ENCODE measurements at regions of chr22 and their contacts with region 1.

Region 1: DNA sequence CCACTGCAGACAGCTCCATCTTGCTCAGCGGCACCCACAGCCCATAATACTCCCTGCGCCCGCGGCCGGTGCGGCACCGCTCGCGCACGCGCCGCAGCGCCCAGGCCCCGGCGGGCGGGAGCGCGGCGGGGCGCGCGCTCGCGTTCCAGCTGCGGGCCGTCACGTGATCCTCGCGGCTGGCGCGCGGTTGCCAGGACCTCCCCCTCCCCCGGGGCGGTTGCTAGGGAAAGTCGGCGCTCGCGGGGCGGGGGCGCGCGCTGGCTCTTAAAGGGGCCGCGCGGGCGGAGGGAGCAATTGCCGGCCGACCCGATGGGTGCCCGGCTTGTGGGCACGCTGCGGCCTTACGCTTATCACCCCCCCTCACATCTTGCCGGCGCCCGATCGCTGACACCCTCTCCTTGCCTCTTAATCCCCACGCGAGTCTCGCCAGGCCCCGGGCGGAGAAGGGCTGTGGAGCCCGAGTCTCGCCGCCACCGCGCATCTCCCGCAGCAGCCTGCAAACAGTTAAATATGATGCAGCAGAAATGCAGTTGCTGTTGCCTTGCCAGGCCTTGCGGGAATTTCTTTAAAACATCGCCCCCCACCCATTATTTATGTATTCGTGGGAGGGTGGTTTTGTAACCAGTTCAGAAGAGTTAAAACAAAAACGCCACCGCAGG is at the start of gene CBX6:
- DNase-seq: peak; percentile 97
- ATAC-seq: peak; percentile 76
- H3K4me3 ChIP-seq: peak within 1 kb of the TSS; percentile 65 to 93 (median 75)
- H3K4me3 Mint-ChIP-seq: peak within 1 kb of the TSS; percentile 94
- H3K27ac ChIP-seq: peak within 1 kb of the TSS; percentile 42 to 54
- H3K27ac Mint-ChIP-seq: peak within 1 kb of the TSS; percentile 92
- H3K4me1 ChIP-seq: peaks cover 31 to 49% of the 10 kb centered on the region in 2 donors
- H3K4me1 Mint-ChIP-seq: peaks cover 49% of the 10 kb centered on the region
- H3K27me3 ChIP-seq: peaks cover 0 to 23% (median 8%) of the 10 kb centered on the region in 4 experiments
- H3K27me3 Mint-ChIP-seq: peaks cover 19% of the 10 kb centered on the region
- CTCF ChIP-seq: no peak
- total RNA-seq, gene CBX6: 55.1 and 57.6 TPM in 2 replicates

Region 2: GRCh38 chr22:38681784-38682335 is 190.4 kb before region 1 on chr22 and contains the start of gene TOMM22:
- CTCF ChIA-PET with region 1: interaction called, 3 read pairs
- POLR2A ChIA-PET with region 1: no interaction called
- intact Hi-C with region 1: loop called (anchors 5 kb)
- DNase-seq: peak; percentile 91
- ATAC-seq: peak; percentile 98
- H3K4me3 ChIP-seq: peak within 1 kb of the TSS; percentile 78 to 96 (median 87)
- H3K4me3 Mint-ChIP-seq: peak within 1 kb of the TSS; percentile 100
- H3K27ac ChIP-seq: peak within 1 kb of the TSS; percentile 70 to 88
- H3K27ac Mint-ChIP-seq: peak within 1 kb of the TSS; percentile 96
- H3K4me1 ChIP-seq: peaks cover 11 to 15% of the 10 kb centered on the region in 2 donors
- H3K4me1 Mint-ChIP-seq: peaks cover 22% of the 10 kb centered on the region
- H3K27me3 ChIP-seq: no peaks in the 10 kb centered on the region
- H3K27me3 Mint-ChIP-seq: no peaks in the 10 kb centered on the region
- CTCF ChIP-seq: peak; percentile 72
- total RNA-seq, gene TOMM22: 47.6 and 48.2 TPM in 2 replicates

Region 3: GRCh38 chr22:38793721-38794466 is 78.4 kb before region 1 on chr22 and contains the start of gene DNAL4:
- CTCF ChIA-PET with region 1: interaction called, 3 read pairs
- POLR2A ChIA-PET with region 1: no interaction called
- intact Hi-C with region 1: loop called (anchors 1 kb)
- DNase-seq: peak; percentile 98
- ATAC-seq: peak; percentile 98
- H3K4me3 ChIP-seq: peak within 1 kb of the TSS; percentile 54 to 85 (median 66)
- H3K4me3 Mint-ChIP-seq: peak within 1 kb of the TSS; percentile 95
- H3K27ac ChIP-seq: peak within 1 kb of the TSS; percentile 47 to 85
- H3K27ac Mint-ChIP-seq: peak within 1 kb of the TSS; percentile 86
- H3K4me1 ChIP-seq: peaks cover 10 to 14% of the 10 kb centered on the region in 2 donors
- H3K4me1 Mint-ChIP-seq: peaks cover 19% of the 10 kb centered on the region
- H3K27me3 ChIP-seq: peaks cover 0 to 17% (median 4%) of the 10 kb centered on the region in 4 experiments
- H3K27me3 Mint-ChIP-seq: peaks cover 26% of the 10 kb centered on the region
- CTCF ChIP-seq: no peak
- total RNA-seq, gene DNAL4: 9.0 and 10.3 TPM in 2 replicates

Region 4: GRCh38 chr22:39003165-39003638 is 130.9 kb after region 1 on chr22:
- CTCF ChIA-PET with region 1: interaction called, 167 read pairs
- POLR2A ChIA-PET with region 1: no interaction called
- intact Hi-C with region 1: loop called (anchors 1 kb)
- DNase-seq: peak; percentile 84
- ATAC-seq: peak; percentile 93
- H3K4me3 ChIP-seq: no peak overlapping the region
- H3K4me3 Mint-ChIP-seq: no peak overlapping the region
- H3K27ac ChIP-seq: no peak overlapping the region
- H3K27ac Mint-ChIP-seq: peak overlapping the region; percentile 27
- H3K4me1 ChIP-seq: peaks cover 7 to 12% of the 10 kb centered on the region in 2 donors
- H3K4me1 Mint-ChIP-seq: peaks cover 13% of the 10 kb centered on the region
- H3K27me3 ChIP-seq: no peaks in the 10 kb centered on the region
- H3K27me3 Mint-ChIP-seq: peaks cover 2% of the 10 kb centered on the region
- CTCF ChIP-seq: peak; percentile 80

Region 5: GRCh38 chr22:39068033-39068791 is 195.9 kb after region 1 on chr22:
- CTCF ChIA-PET with region 1: no interaction called
- POLR2A ChIA-PET with region 1: no interaction called
- intact Hi-C with region 1: no loop called
- DNase-seq: peak; percentile 42
- ATAC-seq: no peak
- H3K4me3 ChIP-seq: peak overlapping the region; percentile 50 to 99 (median 96)
- H3K4me3 Mint-ChIP-seq: no peak overlapping the region
- H3K27ac ChIP-seq: peak overlapping the region; percentile 97 to 98
- H3K27ac Mint-ChIP-seq: no peak overlapping the region
- H3K4me1 ChIP-seq: peaks cover 70 to 95% of the 10 kb centered on the region in 2 donors
- H3K4me1 Mint-ChIP-seq: peaks cover 45% of the 10 kb centered on the region
- H3K27me3 ChIP-seq: no peaks in the 10 kb centered on the region
- H3K27me3 Mint-ChIP-seq: no peaks in the 10 kb centered on the region
- CTCF ChIP-seq: peak; percentile 54

Region 6: GRCh38 chr22:39122786-39123475 is 250.6 kb after region 1 on chr22:
- CTCF ChIA-PET with region 1: interaction called, 22 read pairs
- POLR2A ChIA-PET with region 1: no interaction called
- intact Hi-C with region 1: loop called (anchors 1 kb)
- DNase-seq: no peak
- ATAC-seq: no peak
- H3K4me3 ChIP-seq: no peak overlapping the region
- H3K4me3 Mint-ChIP-seq: no peak overlapping the region
- H3K27ac ChIP-seq: no peak overlapping the region
- H3K27ac Mint-ChIP-seq: no peak overlapping the region
- H3K4me1 ChIP-seq: peaks cover 5 to 12% of the 10 kb centered on the region in 2 donors
- H3K4me1 Mint-ChIP-seq: peaks cover 16% of the 10 kb centered on the region
- H3K27me3 ChIP-seq: no peaks in the 10 kb centered on the region
- H3K27me3 Mint-ChIP-seq: no peaks in the 10 kb centered on the region
- CTCF ChIP-seq: no peak

Region 7: GRCh38 chr22:39319270-39320022 is 447.1 kb after region 1 on chr22 and contains the start of gene RPL3:
- CTCF ChIA-PET with region 1: interaction called, 65 read pairs
- POLR2A ChIA-PET with region 1: interaction called, 7 read pairs
- intact Hi-C with region 1: no loop called
- DNase-seq: peak; percentile 100
- ATAC-seq: peak; percentile 86
- H3K4me3 ChIP-seq: peak within 1 kb of the TSS; percentile 80 to 99 (median 85)
- H3K4me3 Mint-ChIP-seq: peak within 1 kb of the TSS; percentile 99
- H3K27ac ChIP-seq: peak within 1 kb of the TSS; percentile 90 to 95
- H3K27ac Mint-ChIP-seq: peak within 1 kb of the TSS; percentile 98
- H3K4me1 ChIP-seq: peaks cover 27 to 38% of the 10 kb centered on the region in 2 donors
- H3K4me1 Mint-ChIP-seq: peaks cover 38% of the 10 kb centered on the region
- H3K27me3 ChIP-seq: no peaks in the 10 kb centered on the region
- H3K27me3 Mint-ChIP-seq: no peaks in the 10 kb centered on the region
- CTCF ChIP-seq: no peak
- total RNA-seq, gene RPL3: 2,562 and 2,665 TPM in 2 replicates

Region 8: GRCh38 chr22:40177738-40178416 is 1305.6 kb after region 1 on chr22 and contains the start of gene TNRC6B:
- CTCF ChIA-PET with region 1: no interaction called
- POLR2A ChIA-PET with region 1: no interaction called
- intact Hi-C with region 1: loop called (anchors 5 kb)
- DNase-seq: peak; percentile 93
- ATAC-seq: peak; percentile 90
- H3K4me3 ChIP-seq: peak within 1 kb of the TSS; percentile 56 to 100 (median 72)
- H3K4me3 Mint-ChIP-seq: peak within 1 kb of the TSS; percentile 84
- H3K27ac ChIP-seq: peak within 1 kb of the TSS; percentile 65 to 79
- H3K27ac Mint-ChIP-seq: peak within 1 kb of the TSS; percentile 84
- H3K4me1 ChIP-seq: peaks cover 41 to 42% of the 10 kb centered on the region in 2 donors
- H3K4me1 Mint-ChIP-seq: peaks cover 61% of the 10 kb centered on the region
- H3K27me3 ChIP-seq: no peaks in the 10 kb centered on the region
- H3K27me3 Mint-ChIP-seq: no peaks in the 10 kb centered on the region
- CTCF ChIP-seq: no peak
- total RNA-seq, gene TNRC6B: 210 and 248 TPM in 2 replicates

Measured in B cell (primary cell).